ENCODE measurements at regions of chr9 and their contacts with region 1.

Region 1: DNA sequence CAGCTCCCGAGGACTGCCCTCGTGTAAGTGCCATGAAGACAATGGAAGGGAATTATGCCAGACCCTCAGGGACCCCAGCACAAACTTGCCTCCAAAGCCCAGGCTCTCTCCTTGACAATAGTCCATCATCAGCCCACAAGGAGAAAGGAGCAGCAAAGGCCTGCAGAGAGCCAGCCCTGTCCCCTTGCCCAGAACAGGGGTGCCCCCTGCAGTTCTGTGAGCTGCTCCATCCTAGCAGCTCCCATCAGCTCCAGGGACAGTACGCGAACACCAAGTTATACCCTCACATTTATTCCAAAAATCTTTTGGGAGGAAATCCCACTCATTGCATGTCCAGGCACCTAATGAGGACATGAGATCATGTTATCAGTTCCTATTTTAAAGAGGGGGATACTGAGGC is 11.1 kb downstream of the BARX1 start:
- DNase-seq: no peak
- ATAC-seq: no peak
- H3K4me3 ChIP-seq: no peak overlapping the region
- H3K4me3 Mint-ChIP-seq: no peak overlapping the region
- H3K27ac ChIP-seq: no peak overlapping the region
- H3K27ac Mint-ChIP-seq: no peak overlapping the region
- H3K4me1 ChIP-seq: peaks cover 12% of the 10 kb centered on the region
- H3K4me1 Mint-ChIP-seq: peaks cover 16% of the 10 kb centered on the region
- H3K27me3 ChIP-seq: peaks cover 6 to 11% of the 10 kb centered on the region in 2 experiments
- H3K27me3 Mint-ChIP-seq: peaks cover 74% of the 10 kb centered on the region
- CTCF ChIP-seq: no peak

Region 2: GRCh38 chr9:93771276-93771675 is 172.7 kb before region 1 on chr9:
- CTCF ChIA-PET with region 1: no interaction called
- POLR2A ChIA-PET with region 1: no interaction called
- intact Hi-C with region 1: no loop called
- DNase-seq: no peak
- ATAC-seq: no peak
- H3K4me3 ChIP-seq: no peak overlapping the region
- H3K4me3 Mint-ChIP-seq: no peak overlapping the region
- H3K27ac ChIP-seq: no peak overlapping the region
- H3K27ac Mint-ChIP-seq: no peak overlapping the region
- H3K4me1 ChIP-seq: no peaks in the 10 kb centered on the region
- H3K4me1 Mint-ChIP-seq: no peaks in the 10 kb centered on the region
- H3K27me3 ChIP-seq: no peaks in the 10 kb centered on the region
- H3K27me3 Mint-ChIP-seq: peaks cover 7% of the 10 kb centered on the region
- CTCF ChIP-seq: no peak

Region 3: GRCh38 chr9:93904649-93905472 is 39.1 kb before region 1 on chr9:
- CTCF ChIA-PET with region 1: no interaction called
- POLR2A ChIA-PET with region 1: no interaction called
- intact Hi-C with region 1: loop called in 1 of 2 experiments (anchors 1 kb)
- DNase-seq: no peak
- ATAC-seq: no peak
- H3K4me3 ChIP-seq: no peak overlapping the region
- H3K4me3 Mint-ChIP-seq: no peak overlapping the region
- H3K27ac ChIP-seq: no peak overlapping the region
- H3K27ac Mint-ChIP-seq: no peak overlapping the region
- H3K4me1 ChIP-seq: no peaks in the 10 kb centered on the region
- H3K4me1 Mint-ChIP-seq: peaks cover 3% of the 10 kb centered on the region
- H3K27me3 ChIP-seq: no peaks in the 10 kb centered on the region
- H3K27me3 Mint-ChIP-seq: peaks cover 11% of the 10 kb centered on the region
- CTCF ChIP-seq: no peak

Region 4: GRCh38 chr9:94042516-94043360 is 98.7 kb after region 1 on chr9:
- CTCF ChIA-PET with region 1: no interaction called
- POLR2A ChIA-PET with region 1: no interaction called
- intact Hi-C with region 1: no loop called
- DNase-seq: no peak
- ATAC-seq: no peak
- H3K4me3 ChIP-seq: no peak overlapping the region
- H3K4me3 Mint-ChIP-seq: no peak overlapping the region
- H3K27ac ChIP-seq: no peak overlapping the region
- H3K27ac Mint-ChIP-seq: no peak overlapping the region
- H3K4me1 ChIP-seq: no peaks in the 10 kb centered on the region
- H3K4me1 Mint-ChIP-seq: no peaks in the 10 kb centered on the region
- H3K27me3 ChIP-seq: no peaks in the 10 kb centered on the region
- H3K27me3 Mint-ChIP-seq: no peaks in the 10 kb centered on the region
- CTCF ChIP-seq: no peak